PC-3 (cell line): ENCODE measurements at regions of chr3 and their contacts with region 1.

Region 1: DNA sequence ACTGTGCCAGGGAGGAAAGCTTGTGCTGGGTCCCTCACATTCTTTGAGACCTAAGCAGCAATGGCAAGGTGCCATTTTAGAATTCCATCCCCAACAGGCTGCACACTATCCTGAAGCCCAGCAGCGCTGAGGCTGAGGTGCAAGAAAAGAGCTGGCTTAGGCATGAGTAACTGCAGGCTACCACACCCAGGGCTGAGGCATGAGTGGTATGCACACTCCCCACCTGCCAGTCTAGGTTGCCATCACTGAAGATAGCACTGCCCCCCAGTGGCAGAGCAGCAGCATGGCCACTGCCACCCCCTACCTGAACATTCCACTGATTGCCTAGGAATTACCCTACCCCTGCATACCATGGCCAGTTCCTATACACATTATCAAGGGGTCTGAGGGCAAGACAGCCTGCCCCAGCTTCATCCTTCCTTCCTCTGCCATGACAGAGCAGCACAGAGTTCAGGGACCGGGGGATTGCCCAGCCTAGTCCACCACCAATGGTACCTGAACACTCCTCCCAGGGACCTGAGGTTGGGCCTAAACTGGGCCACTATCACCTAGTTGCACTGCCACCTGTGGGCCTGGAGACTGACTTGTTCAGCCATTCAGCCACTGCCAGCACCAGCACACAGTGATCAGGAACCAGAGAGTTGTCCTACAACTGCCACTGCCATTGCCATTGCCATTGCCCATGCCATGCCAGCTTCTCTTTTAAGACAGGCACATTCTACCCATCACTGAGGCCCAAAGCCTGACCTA is 129.8 kb downstream of the SATB1 start:
- DNase-seq: peak; percentile 97
- ATAC-seq: peak; percentile 100
- H3K4me3 ChIP-seq: no peak overlapping the region
- H3K27ac ChIP-seq: peak overlapping the region; percentile 31
- H3K4me1 ChIP-seq: peaks cover 10% of the 10 kb centered on the region
- H3K27me3 ChIP-seq: no peaks in the 10 kb centered on the region
- CTCF ChIP-seq: peak; percentile 96

Region 2: GRCh38 chr3:17605032-17605431 is 690.3 kb before region 1 on chr3:
- CTCF ChIA-PET with region 1: no interaction called
- POLR2A ChIA-PET with region 1: no interaction called
- intact Hi-C with region 1: loop called (anchors 1 kb)
- DNase-seq: peak; percentile 92
- ATAC-seq: peak; percentile 93
- H3K4me3 ChIP-seq: no peak overlapping the region
- H3K27ac ChIP-seq: peak overlapping the region; percentile 38
- H3K4me1 ChIP-seq: peaks cover 25% of the 10 kb centered on the region
- H3K27me3 ChIP-seq: no peaks in the 10 kb centered on the region
- CTCF ChIP-seq: no peak

Region 3: DNA sequence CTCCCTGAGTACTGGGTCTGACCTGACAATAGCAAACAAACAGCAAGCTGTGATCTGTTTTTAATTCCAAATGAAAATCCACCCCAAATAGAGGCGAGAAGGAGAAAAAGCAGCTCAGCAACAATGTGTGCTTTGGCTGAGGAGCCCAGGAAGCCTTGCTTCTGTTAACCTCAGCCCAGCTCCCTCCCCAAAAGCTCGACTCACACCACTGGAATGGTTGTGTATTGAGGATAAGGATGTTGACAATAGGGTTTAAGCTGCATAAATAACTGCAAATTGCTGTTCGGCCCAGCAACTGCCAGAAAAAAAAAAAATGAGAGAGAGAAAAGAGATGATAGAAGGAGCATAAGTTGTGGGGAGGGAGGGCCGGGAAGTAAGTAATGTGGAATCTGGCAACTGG is 448.9 kb before region 1 on chr3:
- CTCF ChIA-PET with region 1: no interaction called
- POLR2A ChIA-PET with region 1: no interaction called
- intact Hi-C with region 1: loop called (anchors 2 kb)
- DNase-seq: peak; percentile 45
- ATAC-seq: peak; percentile 86
- H3K4me3 ChIP-seq: no peak overlapping the region
- H3K27ac ChIP-seq: no peak overlapping the region
- H3K4me1 ChIP-seq: no peaks in the 10 kb centered on the region; the same call in 1 of the 2 replicates
- H3K27me3 ChIP-seq: no peaks in the 10 kb centered on the region
- CTCF ChIP-seq: no peak

Region 4: GRCh38 chr3:17905996-17906395 is 389.4 kb before region 1 on chr3:
- CTCF ChIA-PET with region 1: interaction called, 3 read pairs
- POLR2A ChIA-PET with region 1: no interaction called
- intact Hi-C with region 1: loop called (anchors 1 kb)
- DNase-seq: no peak
- ATAC-seq: peak; percentile 54
- H3K4me3 ChIP-seq: no peak overlapping the region
- H3K27ac ChIP-seq: no peak overlapping the region
- H3K4me1 ChIP-seq: no peaks in the 10 kb centered on the region
- H3K27me3 ChIP-seq: no peaks in the 10 kb centered on the region
- CTCF ChIP-seq: peak; percentile 30; the same call in 1 of the 2 replicates

Region 5: DNA sequence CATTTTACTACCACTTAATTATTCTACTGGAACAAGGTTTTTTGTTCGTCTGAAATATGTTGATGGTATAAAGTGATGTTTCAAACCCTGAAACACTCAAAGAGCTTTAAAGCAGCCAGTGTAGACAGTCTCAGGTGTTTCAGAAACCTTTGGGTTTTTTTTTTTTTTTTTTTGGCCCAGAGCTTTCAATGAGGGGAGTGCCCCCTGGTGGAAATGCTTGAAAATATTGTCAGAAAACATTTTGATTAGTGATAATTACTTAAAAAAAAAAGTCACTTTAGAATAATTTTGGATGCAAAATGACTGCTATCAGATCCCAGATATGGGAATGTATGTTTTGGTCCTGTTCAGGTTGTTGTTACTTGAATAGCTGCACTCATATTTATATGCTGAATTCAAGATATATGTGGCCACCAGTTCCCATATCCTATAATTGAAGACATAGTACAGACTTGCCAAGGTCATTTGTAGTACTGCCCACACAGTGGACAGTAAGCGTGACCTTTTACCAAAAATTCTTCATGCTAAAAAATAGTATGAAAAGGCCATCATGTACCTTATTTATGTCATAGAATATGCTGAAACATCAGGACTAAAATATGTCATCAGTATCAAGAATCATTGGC is 93.9 kb after region 1 on chr3:
- CTCF ChIA-PET with region 1: no interaction called
- POLR2A ChIA-PET with region 1: no interaction called
- intact Hi-C with region 1: loop called (anchors 5 kb)
- DNase-seq: peak; percentile 60
- ATAC-seq: no peak
- H3K4me3 ChIP-seq: no peak overlapping the region
- H3K27ac ChIP-seq: no peak overlapping the region
- H3K4me1 ChIP-seq: no peaks in the 10 kb centered on the region
- H3K27me3 ChIP-seq: no peaks in the 10 kb centered on the region
- CTCF ChIP-seq: peak; percentile 83